Activated CD8-positive, alpha-beta memory T cell treated with anti-CD3 and anti-CD28 coated beads, Interleukin-2, amount 10 ng/mL, durations not matched to agents 7 days and 5 days (primary cell): ENCODE measurements at regions of chr7 and their contacts with region 1.

Region 1: DNA sequence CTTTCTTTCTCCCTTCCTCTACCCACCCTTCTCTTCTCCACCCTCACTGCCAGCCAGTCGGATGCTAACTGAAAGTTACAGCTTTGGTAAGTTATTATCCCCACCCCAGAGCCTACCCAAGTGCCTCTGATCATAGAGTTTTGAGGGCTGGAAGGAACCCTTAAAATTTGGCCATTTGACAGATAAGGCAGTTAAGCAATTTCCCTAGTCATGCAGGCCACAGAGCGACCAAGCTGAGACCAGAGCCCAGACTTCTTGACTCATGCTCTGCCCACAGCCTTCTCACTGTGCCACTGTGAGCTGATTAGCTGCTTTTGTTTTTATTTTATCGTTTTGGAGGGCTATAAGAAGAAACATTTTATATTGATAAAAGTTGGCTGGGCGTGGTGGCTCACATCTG is 17.2 kb downstream of the SAP25 start:
- DNase-seq: no peak
- ATAC-seq: no peak
- H3K4me3 Mint-ChIP-seq: no peak overlapping the region
- H3K27ac Mint-ChIP-seq: peak overlapping the region; percentile 42
- H3K4me1 Mint-ChIP-seq: peaks cover 28% of the 10 kb centered on the region
- H3K27me3 Mint-ChIP-seq: no peaks in the 10 kb centered on the region

Region 2: GRCh38 chr7:100444311-100445278 is 111.9 kb before region 1 on chr7:
- CTCF ChIA-PET with region 1: interaction called, 10 read pairs
- DNase-seq: no peak
- ATAC-seq: peak; percentile 63
- H3K4me3 Mint-ChIP-seq: no peak overlapping the region
- H3K27ac Mint-ChIP-seq: peak overlapping the region; percentile 74
- H3K4me1 Mint-ChIP-seq: peaks cover 20% of the 10 kb centered on the region
- H3K27me3 Mint-ChIP-seq: no peaks in the 10 kb centered on the region

Region 3: DNA sequence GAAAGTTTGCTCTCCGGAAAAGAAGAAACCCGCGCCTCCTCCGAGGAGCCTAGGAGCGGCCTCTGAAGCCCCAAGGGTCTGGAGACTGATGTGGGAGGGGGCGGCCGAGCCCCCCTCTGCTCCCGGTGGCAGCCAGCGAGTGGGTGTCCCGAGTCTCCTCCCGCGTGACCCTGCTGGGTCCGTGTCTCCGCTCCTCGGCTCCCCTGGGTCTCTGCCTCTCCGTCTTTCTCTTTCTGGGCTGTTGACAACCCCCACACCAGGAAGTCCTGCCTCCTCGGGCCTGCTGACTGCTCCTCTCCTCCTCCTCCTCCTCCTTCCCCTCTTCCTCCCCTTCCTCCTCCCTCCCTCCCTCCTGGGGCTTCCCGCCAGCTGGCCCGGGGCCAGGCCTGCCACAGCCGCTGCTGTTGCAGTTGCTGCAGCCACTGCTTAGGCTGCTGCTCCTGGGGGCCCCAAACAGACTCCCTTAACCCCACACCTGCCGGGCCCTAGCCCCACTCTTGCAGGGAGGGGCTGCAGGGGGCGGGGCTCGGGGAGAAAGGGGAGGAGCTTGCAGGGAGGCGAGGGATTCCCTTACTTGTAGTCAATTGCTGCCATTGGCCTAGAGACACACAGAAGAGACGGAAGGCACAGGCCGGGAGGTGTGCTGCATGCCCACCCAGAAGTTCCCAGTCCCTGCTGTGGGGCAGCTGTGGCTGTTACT is 77.4 kb before region 1 on chr7 and contains the start of gene TSC22D4:
- CTCF ChIA-PET with region 1: interaction called, 102 read pairs
- DNase-seq: peak; percentile 97
- ATAC-seq: peak; percentile 81
- H3K4me3 Mint-ChIP-seq: peak within 1 kb of the TSS; percentile 95
- H3K27ac Mint-ChIP-seq: peak within 1 kb of the TSS; percentile 90
- H3K4me1 Mint-ChIP-seq: peaks cover 38% of the 10 kb centered on the region
- H3K27me3 Mint-ChIP-seq: no peaks in the 10 kb centered on the region
- total RNA-seq, gene TSC22D4: 128 to 144 TPM

Region 4: GRCh38 chr7:100532165-100533022 is 24.1 kb before region 1 on chr7:
- CTCF ChIA-PET with region 1: interaction called, 18 read pairs
- DNase-seq: no peak
- ATAC-seq: no peak
- H3K4me3 Mint-ChIP-seq: no peak overlapping the region
- H3K27ac Mint-ChIP-seq: no peak overlapping the region
- H3K4me1 Mint-ChIP-seq: peaks cover 6% of the 10 kb centered on the region
- H3K27me3 Mint-ChIP-seq: no peaks in the 10 kb centered on the region

Region 5: GRCh38 chr7:100545360-100546128 is 11.0 kb before region 1 on chr7:
- CTCF ChIA-PET with region 1: interaction called, 158 read pairs
- DNase-seq: peak; percentile 81
- ATAC-seq: peak; percentile 67
- H3K4me3 Mint-ChIP-seq: peak overlapping the region; percentile 99
- H3K27ac Mint-ChIP-seq: peak overlapping the region; percentile 95
- H3K4me1 Mint-ChIP-seq: peaks cover 97% of the 10 kb centered on the region
- H3K27me3 Mint-ChIP-seq: no peaks in the 10 kb centered on the region

Region 6: DNA sequence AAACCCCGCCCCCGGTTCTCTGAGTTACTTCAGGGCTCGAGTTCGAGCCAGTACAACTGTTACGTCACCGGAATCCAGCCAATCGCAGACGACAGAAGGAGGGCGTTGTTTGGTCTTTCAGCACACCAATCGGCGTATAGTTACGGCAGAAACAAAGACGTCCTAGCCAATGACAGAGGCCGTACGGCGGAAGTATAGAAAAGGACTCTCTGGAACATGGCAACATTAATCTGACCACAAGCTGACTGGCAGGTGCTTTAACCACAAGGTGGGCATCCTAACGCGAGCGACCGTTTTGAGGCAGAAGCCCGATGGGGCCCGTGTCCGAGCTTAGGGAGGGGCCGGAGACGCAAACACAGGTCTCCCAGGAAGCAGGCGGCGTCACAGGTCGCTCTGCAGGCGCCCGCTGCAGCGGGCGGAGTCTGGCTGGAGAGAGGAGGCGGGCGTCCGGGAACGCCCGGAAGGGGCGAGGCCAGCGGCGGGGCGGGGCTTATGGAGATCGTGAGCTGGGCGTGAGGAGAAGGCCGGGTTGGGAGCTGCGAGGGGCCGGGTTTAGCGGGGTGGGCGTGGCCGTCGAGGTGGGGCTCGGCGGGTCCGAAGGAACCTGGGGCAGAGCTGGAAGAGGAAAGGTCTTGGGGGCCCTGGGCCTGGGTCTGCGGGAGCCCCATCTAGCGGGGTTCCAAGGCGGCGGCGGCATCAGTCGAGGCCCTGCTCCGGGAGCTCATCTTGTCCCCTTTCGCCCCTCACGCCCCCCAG is 55.6 kb after region 1 on chr7 and contains the start of gene MOSPD3:
- CTCF ChIA-PET with region 1: no interaction called
- DNase-seq: peak; percentile 99
- ATAC-seq: peak; percentile 95
- H3K4me3 Mint-ChIP-seq: peak within 1 kb of the TSS; percentile 87
- H3K27ac Mint-ChIP-seq: peak within 1 kb of the TSS; percentile 100
- H3K4me1 Mint-ChIP-seq: peaks cover 22% of the 10 kb centered on the region
- H3K27me3 Mint-ChIP-seq: no peaks in the 10 kb centered on the region
- total RNA-seq, gene MOSPD3: 22.2 to 28.8 TPM